BJ (cell line): ENCODE measurements at regions of chr5 and their contacts with region 1.

Region 1: DNA sequence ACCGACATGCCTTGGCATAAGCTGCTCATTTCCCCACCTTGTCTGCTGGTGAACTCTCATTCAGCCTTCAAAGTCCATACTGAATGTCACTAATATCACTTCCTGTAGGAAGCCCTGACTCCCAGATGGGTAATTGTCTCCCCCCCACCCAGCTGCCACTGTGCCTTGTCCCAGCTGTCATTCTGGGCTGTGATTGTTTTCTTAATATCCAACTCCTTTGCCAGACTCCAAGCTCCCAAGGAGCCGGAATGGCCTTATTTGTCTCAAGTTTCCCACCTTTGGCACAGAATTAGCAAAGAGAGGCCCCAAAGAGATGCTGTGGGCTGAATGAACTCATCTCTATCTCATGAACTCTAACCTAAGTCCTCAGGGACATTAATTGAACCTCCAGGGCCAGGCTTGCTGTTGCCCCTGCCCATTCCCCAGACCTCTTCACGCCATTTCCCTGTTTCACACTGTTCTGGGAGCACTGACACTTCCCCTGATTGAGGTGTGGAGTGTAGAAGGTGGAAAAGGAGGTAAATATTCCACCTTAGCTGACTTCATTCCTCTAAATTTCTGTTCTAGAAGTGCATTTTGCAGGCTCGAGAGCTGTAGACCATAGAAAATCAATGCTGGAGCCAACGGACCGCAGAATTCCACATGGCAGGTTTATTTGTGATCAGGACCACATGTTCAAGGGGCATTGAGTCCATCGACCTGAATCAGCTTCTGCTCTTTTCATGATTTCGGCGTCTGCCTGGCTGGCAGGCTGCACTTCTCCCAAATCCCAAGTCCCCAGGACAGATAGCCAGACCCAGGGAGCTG is 4.9 kb upstream of the SH3PXD2B start:
- DNase-seq: no peak
- H3K4me3 ChIP-seq: no peak overlapping the region
- H3K27me3 ChIP-seq: no peaks in the 10 kb centered on the region; the same call in 1 of the 2 replicates
- CTCF ChIP-seq: no peak

Region 2: DNA sequence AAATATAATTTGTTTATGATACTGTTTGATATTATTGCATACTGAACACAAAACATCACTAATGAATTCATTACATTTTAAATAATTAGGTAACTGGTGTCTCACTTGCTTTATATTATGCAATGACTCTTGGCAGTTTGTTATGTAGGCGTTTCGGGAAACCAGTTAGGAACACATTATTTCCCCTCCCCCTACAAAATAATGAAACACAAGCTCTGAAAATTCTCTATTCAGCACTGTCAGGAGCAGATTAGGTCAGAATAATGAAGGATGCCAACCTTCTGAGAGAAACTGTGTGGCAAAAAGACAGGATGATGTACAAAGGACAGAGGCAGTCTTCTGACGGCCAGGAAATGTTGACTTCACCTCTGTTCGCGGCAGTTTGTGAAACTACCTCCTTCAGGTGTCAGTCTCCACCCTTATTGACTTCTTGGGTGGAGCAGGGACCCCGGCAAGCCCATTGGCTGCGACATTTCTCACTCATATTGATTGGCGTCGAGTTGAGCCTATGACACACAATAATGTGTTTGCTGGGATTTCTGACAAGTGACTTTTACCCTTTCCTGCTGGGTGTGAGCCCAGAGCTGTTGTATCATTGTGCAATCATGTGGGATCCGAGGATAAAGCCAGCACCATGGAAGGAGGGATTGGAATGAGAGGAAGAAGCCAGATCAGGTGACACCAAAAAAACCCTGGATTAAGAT is 38.8 kb before region 1 on chr5:
- CTCF ChIA-PET with region 1: no interaction called
- POLR2A ChIA-PET with region 1: interaction called, 10 read pairs
- DNase-seq: peak; percentile 70
- H3K4me3 ChIP-seq: no peak overlapping the region
- H3K27me3 ChIP-seq: no peaks in the 10 kb centered on the region
- CTCF ChIP-seq: no peak